Uterus (tissue), 4 donors: ENCODE measurements at regions of chr14 and their contacts with region 1.

Region 1: DNA sequence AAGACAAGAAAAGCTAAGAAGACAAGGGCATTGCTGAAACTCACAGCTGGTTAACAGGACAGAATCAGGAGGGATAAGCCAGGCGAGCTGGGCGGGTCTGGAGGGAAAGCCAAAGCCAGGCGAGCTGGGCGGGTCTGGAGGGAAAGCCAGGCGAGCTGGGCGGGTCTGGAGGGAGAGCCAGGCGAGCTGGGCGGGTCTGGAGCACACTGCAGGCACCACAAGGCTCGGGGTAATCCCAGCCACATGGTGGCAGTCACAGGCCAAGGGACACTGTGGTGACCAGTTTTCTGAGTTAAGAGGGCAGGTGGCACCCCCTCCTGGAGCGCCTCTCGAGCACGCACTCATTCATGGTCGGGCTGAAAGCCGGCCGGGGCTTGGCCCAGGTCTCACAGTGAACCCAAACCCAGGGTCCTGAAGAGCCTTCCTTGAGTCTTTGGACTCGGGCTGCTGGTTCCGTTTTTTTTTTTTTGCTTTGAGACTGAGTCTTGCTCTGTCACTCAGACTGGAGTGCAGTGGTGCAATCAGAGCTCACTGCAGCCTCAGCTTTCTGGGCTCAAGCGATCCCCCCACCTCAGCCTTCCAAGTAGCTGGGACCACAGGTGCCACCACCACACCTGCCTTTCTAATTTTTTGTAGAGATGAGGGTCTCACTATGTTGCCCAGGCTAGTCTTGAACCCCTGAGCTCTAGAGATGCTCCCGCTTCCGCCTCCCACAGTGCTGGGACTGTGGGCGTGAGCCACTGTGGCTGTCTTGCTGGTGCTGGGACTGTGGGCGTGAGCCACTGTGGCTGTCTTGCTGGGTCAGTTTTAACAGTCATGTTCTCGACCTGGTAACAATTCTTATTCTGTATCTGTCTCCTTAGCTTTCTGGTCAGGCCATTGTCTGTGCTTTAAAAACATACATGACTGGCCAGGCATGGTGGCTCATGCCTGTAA is 40.2 kb downstream of the HSP90AA1 start:
- DNase-seq: peak; percentile 69 to 85
- H3K4me3 ChIP-seq: no peak overlapping the region
- H3K27ac ChIP-seq: peak overlapping the region; percentile 8 to 32
- H3K4me1 ChIP-seq: no peaks in the 10 kb centered on the region
- H3K27me3 ChIP-seq: no peaks in the 10 kb centered on the region
- CTCF ChIP-seq: peak; percentile 7 to 61 (median 35)
- POLR2A ChIP-seq: no peak

Region 2: GRCh38 chr14:101917413-101918017 is 129.1 kb before region 1 on chr14:
- intact Hi-C with region 1: no loop called
- DNase-seq: no peak
- H3K4me3 ChIP-seq: no peak overlapping the region
- H3K27ac ChIP-seq: no peak overlapping the region
- H3K4me1 ChIP-seq: no peaks in the 10 kb centered on the region
- H3K27me3 ChIP-seq: no peaks in the 10 kb centered on the region
- CTCF ChIP-seq: no peak
- POLR2A ChIP-seq: no peak

Region 3: DNA sequence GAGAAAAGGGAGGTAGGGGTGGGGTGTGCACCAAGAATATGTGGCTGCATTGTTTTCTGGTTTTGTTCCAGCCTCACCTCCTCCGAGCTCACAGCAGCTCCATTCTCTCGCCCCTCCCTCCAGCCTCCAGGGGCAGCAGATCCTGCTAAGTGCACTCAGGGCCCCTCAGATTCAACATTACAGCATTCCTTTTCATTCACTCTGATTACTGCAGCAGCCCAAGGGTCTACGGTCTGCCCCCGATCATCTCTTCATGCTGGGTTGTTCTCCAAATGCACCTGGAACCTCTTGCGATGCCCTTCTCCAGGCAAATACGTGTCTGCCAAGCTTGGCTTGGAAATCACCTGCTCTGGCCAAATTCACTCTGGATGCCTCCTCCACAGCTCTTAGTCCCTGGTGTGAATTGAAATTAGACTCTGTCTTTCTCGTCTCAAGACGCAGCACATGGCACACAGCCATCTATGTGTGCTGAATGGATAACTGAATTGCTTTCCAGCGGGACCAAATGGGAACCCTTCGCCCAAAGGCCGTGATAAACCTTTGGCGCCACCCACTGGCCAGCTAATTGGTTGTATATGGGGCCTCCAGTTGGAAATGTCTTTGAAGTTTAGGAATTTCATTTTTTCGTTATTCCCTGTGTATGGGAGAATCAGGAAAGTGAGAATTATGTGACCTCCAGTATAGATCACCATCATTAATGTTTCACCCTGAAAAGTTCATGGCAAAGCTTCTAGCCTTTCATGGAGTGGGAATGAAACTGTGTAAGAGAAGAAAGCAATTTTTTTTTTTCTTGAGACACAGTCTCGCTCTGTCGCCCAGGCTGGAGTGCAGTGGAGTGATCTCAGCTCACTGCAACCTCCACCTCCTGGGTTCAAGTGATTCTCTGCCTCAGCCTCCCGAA is 49.9 kb after region 1 on chr14:
- intact Hi-C with region 1: loop called (anchors 10 kb)
- DNase-seq: peak; percentile 87 to 88
- H3K4me3 ChIP-seq: no peak overlapping the region
- H3K27ac ChIP-seq: peak overlapping the region in 1 of 2 donors; percentile 16
- H3K4me1 ChIP-seq: no peaks in the 10 kb centered on the region
- H3K27me3 ChIP-seq: no peaks in the 10 kb centered on the region
- CTCF ChIP-seq: peak; percentile 78 to 85 (median 82)
- POLR2A ChIP-seq: no peak

Region 4: DNA sequence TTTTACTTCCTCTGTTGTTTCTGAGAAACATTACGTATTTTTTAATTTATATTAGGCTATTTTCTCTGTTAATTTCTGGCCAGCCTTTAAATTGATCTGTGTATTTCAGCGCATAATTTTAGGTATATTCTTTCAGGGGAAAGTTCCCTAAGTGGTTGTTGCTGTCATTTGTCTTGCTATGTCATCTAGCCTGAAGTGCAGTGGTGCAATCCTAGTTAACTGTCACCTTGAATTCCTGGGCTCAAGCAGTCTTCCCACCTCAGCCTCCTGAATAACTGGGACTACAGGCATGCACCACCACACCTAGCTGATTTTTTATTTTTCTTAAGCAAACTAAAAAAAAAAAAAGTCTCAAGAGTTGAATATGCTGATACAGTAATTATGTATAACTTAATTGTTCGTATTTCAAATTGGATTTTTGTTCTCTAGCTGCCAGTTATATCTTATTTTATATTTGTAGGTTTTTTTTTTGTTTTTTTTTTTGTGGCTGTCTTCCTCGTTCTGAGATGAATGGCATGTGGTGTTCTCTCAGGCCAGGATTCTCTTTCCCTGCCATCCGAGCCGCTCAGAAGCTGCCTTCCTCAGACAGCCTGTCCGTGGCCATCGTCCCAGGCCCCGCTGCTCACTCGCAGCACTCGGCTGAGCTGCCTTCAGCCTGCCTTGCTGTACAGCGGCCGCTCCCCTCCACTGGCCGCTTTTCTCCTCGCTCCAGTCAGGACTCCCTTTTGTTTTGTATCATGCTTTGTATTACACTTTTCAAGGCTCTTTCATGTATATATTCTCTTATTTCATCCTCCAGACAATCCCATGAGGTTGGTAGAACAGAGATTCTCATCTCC is 146.3 kb after region 1 on chr14:
- intact Hi-C with region 1: no loop called
- DNase-seq: no peak
- H3K4me3 ChIP-seq: no peak overlapping the region
- H3K27ac ChIP-seq: no peak overlapping the region
- H3K4me1 ChIP-seq: no peaks in the 10 kb centered on the region
- H3K27me3 ChIP-seq: no peaks in the 10 kb centered on the region
- CTCF ChIP-seq: no peak
- POLR2A ChIP-seq: no peak